ENCODE measurements at regions of chr15 and their contacts with region 1.

Region 1: GRCh38 chr15:31302778-31303725 is 23.6 kb upstream of the KLF13 start:
- DNase-seq: no peak
- ATAC-seq: peak; percentile 76
- H3K4me3 ChIP-seq: no peak overlapping the region
- H3K27ac ChIP-seq: no peak overlapping the region
- H3K4me1 ChIP-seq: peaks cover 19% of the 10 kb centered on the region
- H3K27me3 ChIP-seq: no peaks in the 10 kb centered on the region
- CTCF ChIP-seq: peak; percentile 19 to 34 (median 31); a peak in 5 of 6 replicates
- EP300 ChIP-seq: no peak
- POLR2A ChIP-seq: no peak
- RAD21 ChIP-seq: peak; percentile 40; the same call in 1 of the 2 replicates

Region 2: GRCh38 chr15:31276596-31277298 is 26.3 kb before region 1 on chr15:
- CTCF ChIA-PET with region 1: no interaction called
- POLR2A ChIA-PET with region 1: no interaction called
- RAD21 ChIA-PET with region 1: no interaction called
- SMC1A ChIA-PET with region 1: no interaction called
- in situ Hi-C with region 1: no loop called
- intact Hi-C with region 1: no loop called
- DNase-seq: no peak
- ATAC-seq: no peak
- H3K4me3 ChIP-seq: no peak overlapping the region
- H3K27ac ChIP-seq: no peak overlapping the region
- H3K4me1 ChIP-seq: peaks cover 7% of the 10 kb centered on the region
- H3K27me3 ChIP-seq: no peaks in the 10 kb centered on the region
- CTCF ChIP-seq: no peak
- EP300 ChIP-seq: no peak
- POLR2A ChIP-seq: no peak
- RAD21 ChIP-seq: no peak

Region 3: GRCh38 chr15:31292391-31293015 is 10.5 kb before region 1 on chr15:
- CTCF ChIA-PET with region 1: interaction called, 10 read pairs
- POLR2A ChIA-PET with region 1: no interaction called
- RAD21 ChIA-PET with region 1: interaction called, 4 read pairs
- SMC1A ChIA-PET with region 1: interaction called, 6 read pairs
- in situ Hi-C with region 1: no loop called
- intact Hi-C with region 1: no loop called
- DNase-seq: no peak
- ATAC-seq: no peak
- H3K4me3 ChIP-seq: no peak overlapping the region
- H3K27ac ChIP-seq: no peak overlapping the region
- H3K4me1 ChIP-seq: no peaks in the 10 kb centered on the region
- H3K27me3 ChIP-seq: no peaks in the 10 kb centered on the region
- CTCF ChIP-seq: no peak
- EP300 ChIP-seq: no peak
- POLR2A ChIP-seq: no peak
- RAD21 ChIP-seq: no peak

Region 4: GRCh38 chr15:31379042-31379441 is 76.0 kb after region 1 on chr15:
- CTCF ChIA-PET with region 1: no interaction called
- POLR2A ChIA-PET with region 1: no interaction called
- RAD21 ChIA-PET with region 1: no interaction called
- SMC1A ChIA-PET with region 1: no interaction called
- in situ Hi-C with region 1: no loop called
- intact Hi-C with region 1: no loop called
- DNase-seq: no peak
- ATAC-seq: peak; percentile 18; the same call in 1 of the 3 replicates
- H3K4me3 ChIP-seq: no peak overlapping the region
- H3K27ac ChIP-seq: no peak overlapping the region
- H3K4me1 ChIP-seq: no peaks in the 10 kb centered on the region
- H3K27me3 ChIP-seq: no peaks in the 10 kb centered on the region
- CTCF ChIP-seq: no peak; a peak in 1 of 6 replicates
- EP300 ChIP-seq: no peak
- POLR2A ChIP-seq: no peak
- RAD21 ChIP-seq: peak; percentile 8; the same call in 1 of the 2 replicates